AG04450 (cell line): ENCODE measurements at regions of chrX and their contacts with region 1.

Region 1: GRCh38 chrX:24371391-24371972 is 11.0 kb downstream of the SUPT20HL1 start:
- DNase-seq: no peak
- H3K4me3 ChIP-seq: no peak overlapping the region
- H3K27ac ChIP-seq: no peak overlapping the region
- H3K27me3 ChIP-seq: no peaks in the 10 kb centered on the region
- CTCF ChIP-seq: peak; percentile 62

Region 2: DNA sequence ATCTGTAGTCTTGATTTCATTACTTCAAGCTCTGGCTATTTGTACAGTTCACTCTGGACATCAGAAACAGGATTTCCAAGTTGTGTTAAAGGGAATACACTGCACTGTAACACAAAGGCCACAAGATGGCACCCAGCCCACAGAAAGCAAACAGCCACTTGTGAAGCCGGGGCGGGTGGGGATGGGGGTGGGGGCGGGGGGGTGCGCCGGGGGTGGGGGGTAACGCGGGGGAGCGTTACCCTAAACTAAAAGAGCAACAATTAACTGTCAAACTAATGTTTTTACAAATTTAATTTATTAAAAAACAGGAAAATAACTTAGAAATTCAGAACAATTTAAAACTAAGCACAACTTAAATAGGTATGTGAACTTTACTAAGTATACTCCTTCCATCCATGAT is 676.9 kb before region 1 on chrX:
- CTCF ChIA-PET with region 1: no interaction called
- POLR2A ChIA-PET with region 1: no interaction called
- DNase-seq: peak; percentile 16
- H3K4me3 ChIP-seq: no peak overlapping the region
- H3K27ac ChIP-seq: no peak overlapping the region
- H3K27me3 ChIP-seq: no peaks in the 10 kb centered on the region
- CTCF ChIP-seq: peak; percentile 56

Region 3: DNA sequence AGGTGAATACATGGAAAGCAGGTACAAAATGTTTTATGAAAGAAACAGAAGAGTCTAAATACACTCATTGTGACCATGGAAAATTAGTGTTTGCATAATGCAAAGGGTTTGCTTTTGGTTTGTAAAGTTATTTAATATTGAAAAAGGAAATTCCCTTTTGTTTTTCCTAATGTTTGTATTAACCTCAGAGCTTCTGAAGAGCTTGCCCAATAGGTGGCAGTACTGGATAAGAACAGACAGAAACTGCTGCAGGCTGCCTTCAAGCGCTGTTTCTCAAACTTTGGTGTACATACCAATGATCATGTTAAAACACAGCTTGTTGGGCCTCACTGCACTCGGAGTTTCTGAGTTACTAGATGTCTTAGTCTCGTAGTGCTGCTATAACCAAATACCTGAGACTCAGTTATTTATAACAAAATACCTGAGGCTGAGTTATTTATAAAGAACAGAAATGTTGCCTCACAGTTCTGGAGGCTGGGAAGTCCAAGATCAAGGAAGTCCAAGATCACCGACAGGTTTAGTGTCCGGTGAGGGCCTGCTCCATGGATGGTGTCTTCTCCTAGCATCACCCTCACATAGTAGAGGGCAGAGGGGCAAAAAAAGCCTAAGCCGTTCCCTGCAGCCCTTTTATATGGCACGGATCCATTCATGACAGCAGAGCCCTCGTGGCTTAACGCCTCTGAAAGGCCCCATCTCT is 111.8 kb before region 1 on chrX:
- CTCF ChIA-PET with region 1: interaction called, 34 read pairs
- POLR2A ChIA-PET with region 1: no interaction called
- DNase-seq: peak; percentile 34
- H3K4me3 ChIP-seq: no peak overlapping the region
- H3K27ac ChIP-seq: no peak overlapping the region
- H3K27me3 ChIP-seq: no peaks in the 10 kb centered on the region
- CTCF ChIP-seq: peak; percentile 64

Region 4: GRCh38 chrX:24357106-24357505 is 14.4 kb before region 1 on chrX:
- CTCF ChIA-PET with region 1: interaction called, 18 read pairs
- POLR2A ChIA-PET with region 1: interaction called, 4 read pairs
- DNase-seq: no peak
- H3K4me3 ChIP-seq: no peak overlapping the region
- H3K27ac ChIP-seq: no peak overlapping the region
- H3K27me3 ChIP-seq: no peaks in the 10 kb centered on the region
- CTCF ChIP-seq: no peak

Region 5: DNA sequence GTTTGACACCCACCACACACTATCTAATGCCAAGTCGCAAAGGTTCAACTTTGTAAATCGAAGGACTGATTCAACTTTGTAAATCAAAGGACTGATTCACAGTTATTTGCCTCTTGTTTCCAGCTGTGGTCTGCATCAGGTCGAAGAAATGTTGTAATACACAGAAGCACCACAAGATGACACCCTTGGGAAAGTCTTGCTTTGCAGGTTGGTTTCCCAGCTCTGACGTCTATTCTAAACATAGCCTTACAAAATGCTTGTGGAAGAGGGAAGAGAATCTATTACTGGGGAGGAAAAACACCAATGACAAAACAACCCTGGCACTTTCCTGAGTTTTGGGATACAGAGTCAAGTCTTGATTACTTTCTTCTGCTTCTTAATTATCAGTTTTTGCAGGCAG is 24.3 kb after region 1 on chrX:
- CTCF ChIA-PET with region 1: interaction called, 18 read pairs
- POLR2A ChIA-PET with region 1: no interaction called
- DNase-seq: peak; percentile 47
- H3K4me3 ChIP-seq: no peak overlapping the region
- H3K27ac ChIP-seq: no peak overlapping the region
- H3K27me3 ChIP-seq: peaks cover 3% of the 10 kb centered on the region
- CTCF ChIP-seq: peak; percentile 71

Region 6: DNA sequence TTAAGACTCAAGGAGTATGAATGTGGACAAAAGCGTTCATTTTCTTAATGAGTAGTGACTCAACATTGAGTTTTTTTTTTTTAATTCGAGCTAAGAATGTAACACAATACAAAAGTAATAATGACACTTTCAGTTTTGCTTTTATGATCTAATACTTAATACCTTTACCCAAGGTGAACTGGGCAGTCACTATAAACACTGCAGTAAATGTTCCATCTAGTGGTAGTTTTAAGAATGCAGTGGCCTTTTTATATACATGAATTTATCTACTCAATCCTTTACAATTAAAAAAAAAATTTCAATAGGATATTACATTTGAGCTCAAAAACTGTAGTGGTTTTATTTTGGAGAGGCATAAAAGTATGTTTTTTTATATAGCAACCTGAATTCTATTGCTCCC is 127.5 kb after region 1 on chrX:
- CTCF ChIA-PET with region 1: interaction called, 16 read pairs
- POLR2A ChIA-PET with region 1: no interaction called
- DNase-seq: no peak
- H3K4me3 ChIP-seq: no peak overlapping the region
- H3K27ac ChIP-seq: no peak overlapping the region
- H3K27me3 ChIP-seq: no peaks in the 10 kb centered on the region
- CTCF ChIP-seq: peak; percentile 57